Mammary epithelial cell (primary cell): ENCODE measurements at regions of chr5 and their contacts with region 1.

Region 1: GRCh38 chr5:110965773-110966581 is 105.5 kb upstream of the TSLP start:
- DNase-seq: peak; percentile 81
- H3K4me3 ChIP-seq: no peak overlapping the region
- H3K27ac ChIP-seq: peak overlapping the region; percentile 52
- H3K4me1 ChIP-seq: peaks cover 21% of the 10 kb centered on the region
- H3K27me3 ChIP-seq: no peaks in the 10 kb centered on the region
- CTCF ChIP-seq: no peak

Region 2: DNA sequence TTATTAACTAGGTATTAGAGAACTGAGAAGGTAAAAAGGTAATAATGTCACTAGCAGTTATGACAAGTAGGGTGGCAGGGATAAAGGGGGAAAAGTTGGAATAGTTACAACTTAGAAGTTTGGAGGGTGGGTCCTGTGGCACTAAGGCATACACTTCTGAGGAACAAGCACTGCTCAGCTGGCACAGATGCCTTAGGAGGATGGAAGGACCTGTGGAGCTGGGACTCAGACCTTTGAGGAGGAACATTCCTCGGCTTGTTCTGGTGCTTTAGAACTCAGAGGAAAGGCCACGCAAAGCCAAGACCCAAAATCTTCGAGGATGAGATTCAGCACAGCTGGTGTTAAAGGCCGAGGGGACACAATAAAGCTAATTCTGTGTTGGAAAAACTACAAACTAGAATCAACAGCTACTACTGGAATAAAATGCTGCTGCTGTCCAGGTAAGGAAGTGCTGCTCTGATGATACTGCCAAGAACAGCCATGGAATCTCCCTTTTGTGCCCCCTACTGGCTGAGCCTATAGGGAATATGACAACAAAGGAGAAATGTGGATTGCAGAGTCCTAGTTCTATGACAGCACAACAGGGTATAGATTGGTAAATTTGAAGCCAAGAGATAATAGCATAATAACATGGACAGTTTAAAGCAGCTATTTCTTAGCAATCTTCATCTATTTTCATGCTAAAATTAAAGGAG is 100.4 kb before region 1 on chr5:
- CTCF ChIA-PET with region 1: no interaction called
- dilution Hi-C with region 1: no loop called
- in situ Hi-C with region 1: no loop called
- intact Hi-C with region 1: loop called (anchors 5 kb)
- DNase-seq: peak; percentile 58
- H3K4me3 ChIP-seq: no peak overlapping the region
- H3K27ac ChIP-seq: no peak overlapping the region
- H3K4me1 ChIP-seq: no peaks in the 10 kb centered on the region
- H3K27me3 ChIP-seq: no peaks in the 10 kb centered on the region
- CTCF ChIP-seq: peak; percentile 88 to 89

Region 3: GRCh38 chr5:110951373-110951791 is 14.6 kb before region 1 on chr5:
- CTCF ChIA-PET with region 1: no interaction called
- dilution Hi-C with region 1: no loop called
- in situ Hi-C with region 1: no loop called
- intact Hi-C with region 1: loop called (anchors 1 kb)
- DNase-seq: peak; percentile 81
- H3K4me3 ChIP-seq: no peak overlapping the region
- H3K27ac ChIP-seq: peak overlapping the region; percentile 30
- H3K4me1 ChIP-seq: peaks cover 13% of the 10 kb centered on the region
- H3K27me3 ChIP-seq: no peaks in the 10 kb centered on the region
- CTCF ChIP-seq: no peak

Region 4: GRCh38 chr5:111061618-111062017 is 95.6 kb after region 1 on chr5:
- CTCF ChIA-PET with region 1: no interaction called
- dilution Hi-C with region 1: no loop called
- in situ Hi-C with region 1: no loop called
- intact Hi-C with region 1: no loop called
- DNase-seq: peak; percentile 21
- H3K4me3 ChIP-seq: no peak overlapping the region
- H3K27ac ChIP-seq: no peak overlapping the region
- H3K4me1 ChIP-seq: peaks cover 4% of the 10 kb centered on the region
- H3K27me3 ChIP-seq: no peaks in the 10 kb centered on the region
- CTCF ChIP-seq: no peak

Region 5: GRCh38 chr5:111836426-111836825 is 870.4 kb after region 1 on chr5:
- CTCF ChIA-PET with region 1: no interaction called
- dilution Hi-C with region 1: no loop called
- in situ Hi-C with region 1: no loop called
- intact Hi-C with region 1: no loop called
- DNase-seq: no peak
- H3K4me3 ChIP-seq: no peak overlapping the region
- H3K27ac ChIP-seq: no peak overlapping the region
- H3K4me1 ChIP-seq: no peaks in the 10 kb centered on the region
- H3K27me3 ChIP-seq: peaks cover 10% of the 10 kb centered on the region
- CTCF ChIP-seq: no peak